ENCODE measurements at regions of chr1 and their contacts with region 1.

Region 1: GRCh38 chr1:247078261-247079140 is at the start of gene ZNF670:
- DNase-seq: peak; percentile 84 to 92
- H3K4me3 ChIP-seq: peak within 1 kb of the TSS; percentile 95
- H3K27ac ChIP-seq: peak within 1 kb of the TSS; percentile 45
- H3K4me1 ChIP-seq: no peaks in the 10 kb centered on the region; the same call in 1 of the 2 replicates
- H3K27me3 ChIP-seq: no peaks in the 10 kb centered on the region
- CTCF ChIP-seq: no peak; the same call in 1 of the 2 replicates
- total RNA-seq, gene ZNF670: 2.4 and 2.5 TPM in 2 replicates

Region 2: DNA sequence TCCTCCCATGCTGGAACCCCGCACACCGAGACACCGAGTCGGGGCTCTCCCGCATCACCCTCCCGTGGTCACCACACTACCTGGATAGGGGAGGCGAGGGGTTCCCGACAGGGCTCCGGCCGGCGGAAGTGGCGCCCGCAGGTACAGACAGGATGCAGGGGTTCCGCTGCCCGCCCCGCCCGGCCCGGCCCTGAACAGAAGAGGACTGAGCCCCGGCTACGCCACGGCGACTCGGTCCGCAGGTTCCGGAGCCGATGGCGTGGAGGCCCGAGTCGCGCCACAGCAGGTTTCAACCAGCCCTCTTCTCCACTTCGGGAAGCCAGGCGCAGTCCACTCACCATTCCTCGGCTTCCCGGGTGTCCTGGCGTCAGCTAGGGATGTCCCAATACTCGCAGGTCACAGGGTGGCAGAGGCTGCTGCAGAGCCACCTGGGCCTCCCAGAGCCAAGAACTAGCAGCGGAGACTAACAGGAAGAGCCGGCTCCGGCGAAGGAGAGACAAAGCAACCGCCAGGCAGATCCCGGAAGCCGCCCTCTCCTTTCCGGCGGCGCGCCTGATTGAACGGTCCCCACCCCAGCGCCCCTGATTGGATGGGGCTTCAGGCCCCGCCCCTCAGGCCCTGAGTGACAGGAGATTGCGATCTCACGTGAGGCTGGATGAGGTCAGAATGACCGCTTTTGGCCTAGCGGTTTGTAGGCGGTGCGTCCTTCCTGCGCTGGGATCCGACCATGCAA is 25.5 kb after region 1 on chr1 and contains the start of gene ZNF669:
- CTCF ChIA-PET with region 1: no interaction called
- POLR2A ChIA-PET with region 1: no interaction called
- intact Hi-C with region 1: loop called (anchors 1 kb)
- DNase-seq: peak; percentile 80 to 95
- H3K4me3 ChIP-seq: peak within 1 kb of the TSS; percentile 76
- H3K27ac ChIP-seq: peak within 1 kb of the TSS; percentile 53
- H3K4me1 ChIP-seq: 0 out of 2 replicates have a peak, but pooled peaks cover 4% of the 10 kb centered on the region
- H3K27me3 ChIP-seq: peaks cover 8% of the 10 kb centered on the region; the same call in 1 of the 2 replicates
- CTCF ChIP-seq: no peak
- total RNA-seq, gene ZNF669: 5.3 and 7.0 TPM in 2 replicates

Region 3: GRCh38 chr1:248009681-248010080 is 931.2 kb after region 1 on chr1:
- CTCF ChIA-PET with region 1: no interaction called
- POLR2A ChIA-PET with region 1: no interaction called
- intact Hi-C with region 1: no loop called
- DNase-seq: no peak
- H3K4me3 ChIP-seq: no peak overlapping the region
- H3K27ac ChIP-seq: no peak overlapping the region
- H3K4me1 ChIP-seq: no peaks in the 10 kb centered on the region
- H3K27me3 ChIP-seq: no peaks in the 10 kb centered on the region
- CTCF ChIP-seq: no peak